B cell (primary cell): ENCODE measurements at regions of chr6 and their contacts with region 1.

Region 1: DNA sequence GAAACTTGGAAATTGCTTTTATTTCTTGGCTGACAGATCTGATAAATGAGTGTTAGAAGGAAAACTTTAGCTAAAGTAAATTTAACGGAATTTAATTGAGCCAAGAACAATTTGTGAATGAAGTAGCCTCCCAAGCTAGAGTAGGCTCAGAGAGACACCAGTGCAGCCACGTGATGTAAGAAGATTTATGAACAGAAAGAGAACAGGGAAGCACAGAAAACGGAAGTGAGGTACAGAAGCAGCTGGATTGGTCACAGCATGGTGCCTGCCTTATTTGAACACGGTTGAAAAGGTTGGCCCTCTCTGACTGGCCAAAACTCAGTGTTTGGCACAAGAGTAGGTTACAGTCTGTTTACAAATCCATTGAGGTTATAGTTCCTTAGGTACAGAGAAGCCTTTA is 29.5 kb upstream of the IFNGR1 start:
- DNase-seq: peak; percentile 65
- ATAC-seq: peak; percentile 88
- H3K4me3 ChIP-seq: no peak overlapping the region
- H3K4me3 Mint-ChIP-seq: no peak overlapping the region
- H3K27ac ChIP-seq: peak overlapping the region in 1 of 2 donors; percentile 29
- H3K27ac Mint-ChIP-seq: no peak overlapping the region
- H3K4me1 ChIP-seq: peaks cover 9 to 10% of the 10 kb centered on the region in 2 donors
- H3K4me1 Mint-ChIP-seq: peaks cover 14% of the 10 kb centered on the region
- H3K27me3 ChIP-seq: no peaks in the 10 kb centered on the region
- H3K27me3 Mint-ChIP-seq: no peaks in the 10 kb centered on the region
- CTCF ChIP-seq: no peak

Region 2: DNA sequence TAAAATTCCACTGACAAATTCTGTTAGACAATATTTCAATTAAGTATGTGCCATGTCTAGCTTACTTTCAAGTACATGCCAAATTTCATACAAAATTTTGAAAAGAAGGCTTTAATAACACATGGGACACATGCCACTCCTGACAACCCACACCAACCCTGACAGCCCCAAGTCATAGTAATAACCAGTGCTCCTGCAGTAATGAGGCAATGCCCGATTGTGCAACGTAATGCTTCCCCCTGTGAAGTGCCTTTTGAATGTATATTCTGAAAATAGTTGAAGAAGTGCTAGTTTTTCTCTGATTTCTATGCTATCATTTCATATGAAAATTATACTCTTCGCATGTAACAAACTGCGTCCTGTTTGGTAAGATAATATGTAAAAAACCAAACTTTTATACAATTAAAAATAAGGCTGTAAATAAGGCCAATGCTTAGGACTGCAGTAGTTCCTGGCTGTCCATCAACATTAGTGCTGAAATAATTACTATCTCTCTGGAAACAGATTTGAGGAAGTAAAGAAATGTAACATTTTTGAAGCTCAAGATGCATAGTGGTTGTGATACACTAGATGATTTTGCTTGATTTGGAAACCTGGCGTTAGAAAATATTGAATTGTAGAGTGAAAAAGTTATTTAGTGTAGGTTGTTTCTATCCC is 833.2 kb before region 1 on chr6:
- CTCF ChIA-PET with region 1: no interaction called
- POLR2A ChIA-PET with region 1: no interaction called
- intact Hi-C with region 1: no loop called
- DNase-seq: no peak
- ATAC-seq: no peak
- H3K4me3 ChIP-seq: no peak overlapping the region
- H3K4me3 Mint-ChIP-seq: no peak overlapping the region
- H3K27ac ChIP-seq: no peak overlapping the region
- H3K27ac Mint-ChIP-seq: no peak overlapping the region
- H3K4me1 ChIP-seq: no peaks in the 10 kb centered on the region
- H3K4me1 Mint-ChIP-seq: no peaks in the 10 kb centered on the region
- H3K27me3 ChIP-seq: no peaks in the 10 kb centered on the region
- H3K27me3 Mint-ChIP-seq: peaks cover 5% of the 10 kb centered on the region
- CTCF ChIP-seq: no peak

Region 3: GRCh38 chr6:137233911-137234863 is 14.5 kb before region 1 on chr6:
- CTCF ChIA-PET with region 1: no interaction called
- POLR2A ChIA-PET with region 1: no interaction called
- intact Hi-C with region 1: loop called (anchors 2 kb)
- DNase-seq: peak; percentile 65
- ATAC-seq: peak; percentile 78
- H3K4me3 ChIP-seq: peak overlapping the region in 2 of 5 experiments; percentile 13 to 42
- H3K4me3 Mint-ChIP-seq: peak overlapping the region; percentile 80
- H3K27ac ChIP-seq: peak overlapping the region; percentile 29 to 58
- H3K27ac Mint-ChIP-seq: peak overlapping the region; percentile 87
- H3K4me1 ChIP-seq: peaks cover 58 to 59% of the 10 kb centered on the region in 2 donors
- H3K4me1 Mint-ChIP-seq: peaks cover 69% of the 10 kb centered on the region
- H3K27me3 ChIP-seq: no peaks in the 10 kb centered on the region
- H3K27me3 Mint-ChIP-seq: no peaks in the 10 kb centered on the region
- CTCF ChIP-seq: no peak

Region 4: GRCh38 chr6:137378090-137378369 is 129.3 kb after region 1 on chr6:
- CTCF ChIA-PET with region 1: no interaction called
- POLR2A ChIA-PET with region 1: no interaction called
- intact Hi-C with region 1: no loop called
- DNase-seq: no peak
- ATAC-seq: no peak
- H3K4me3 ChIP-seq: no peak overlapping the region
- H3K4me3 Mint-ChIP-seq: no peak overlapping the region
- H3K27ac ChIP-seq: no peak overlapping the region
- H3K27ac Mint-ChIP-seq: no peak overlapping the region
- H3K4me1 ChIP-seq: no peaks in the 10 kb centered on the region
- H3K4me1 Mint-ChIP-seq: peaks cover 4% of the 10 kb centered on the region
- H3K27me3 ChIP-seq: no peaks in the 10 kb centered on the region
- H3K27me3 Mint-ChIP-seq: no peaks in the 10 kb centered on the region
- CTCF ChIP-seq: no peak